Transverse colon (tissue), 4 donors: ENCODE measurements at regions of chr1 and their contacts with region 1.

Region 1: GRCh38 chr1:206982216-206982615 is 12.0 kb upstream of the FCAMR start:
- DNase-seq: peak; percentile 69
- H3K4me3 ChIP-seq: no peak overlapping the region
- H3K27ac ChIP-seq: no peak overlapping the region
- H3K4me1 ChIP-seq: peaks cover 0 to 34% (median 12%) of the 10 kb centered on the region in 4 donors
- H3K27me3 ChIP-seq: no peaks in the 10 kb centered on the region
- CTCF ChIP-seq: peak; percentile 53 to 71 (median 61)
- EP300 ChIP-seq: no peak
- POLR2A ChIP-seq: no peak

Region 2: DNA sequence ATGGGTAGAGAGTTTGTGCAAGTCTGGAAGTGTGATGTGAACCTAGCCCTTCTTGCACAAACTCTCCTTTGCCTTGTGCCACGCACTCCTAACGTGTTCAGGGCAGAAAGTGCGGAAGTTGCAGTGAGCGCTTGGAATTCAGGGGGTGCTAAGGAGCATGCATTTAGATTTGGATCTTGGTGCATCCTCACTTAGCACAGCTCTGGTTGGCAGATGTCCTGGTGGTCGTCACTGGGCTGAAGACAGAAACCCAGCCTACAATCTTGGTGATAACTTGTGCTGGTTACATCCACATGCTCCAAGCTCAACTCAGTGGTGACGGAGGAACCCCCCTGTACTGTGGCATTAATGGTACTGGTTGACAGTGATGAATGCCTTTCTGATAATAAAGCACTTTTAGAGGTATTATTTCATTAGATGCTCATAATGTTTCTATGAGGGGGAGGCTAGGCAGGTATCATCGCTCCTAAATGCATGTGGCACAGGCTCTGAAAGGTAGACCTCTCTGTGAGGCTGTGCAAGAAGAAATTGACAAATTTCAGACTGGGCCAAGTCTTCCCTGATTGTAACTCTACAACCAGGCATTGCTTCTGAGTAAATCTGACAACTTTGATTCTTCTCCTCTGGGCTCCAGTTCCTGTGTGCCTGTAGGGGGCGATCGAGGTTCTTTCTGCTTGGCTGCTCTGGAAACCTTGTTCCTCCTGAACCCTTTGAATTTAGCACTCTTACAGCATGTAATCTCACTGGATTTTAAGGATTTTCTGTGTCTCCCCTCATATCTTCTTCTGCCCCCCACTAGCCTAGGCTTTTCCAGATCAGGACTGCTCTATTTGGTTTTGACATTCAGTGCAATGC is 256.9 kb before region 1 on chr1:
- in situ Hi-C with region 1: loop called in 2 of 4 experiments (anchors 10 kb)
- intact Hi-C with region 1: no loop called
- DNase-seq: peak; percentile 60
- H3K4me3 ChIP-seq: no peak overlapping the region
- H3K27ac ChIP-seq: no peak overlapping the region
- H3K4me1 ChIP-seq: peaks cover 14 to 43% (median 25%) of the 10 kb centered on the region in 4 donors
- H3K27me3 ChIP-seq: no peaks in the 10 kb centered on the region
- CTCF ChIP-seq: peak; percentile 25 to 63 (median 40)
- EP300 ChIP-seq: no peak
- POLR2A ChIP-seq: no peak

Region 3: DNA sequence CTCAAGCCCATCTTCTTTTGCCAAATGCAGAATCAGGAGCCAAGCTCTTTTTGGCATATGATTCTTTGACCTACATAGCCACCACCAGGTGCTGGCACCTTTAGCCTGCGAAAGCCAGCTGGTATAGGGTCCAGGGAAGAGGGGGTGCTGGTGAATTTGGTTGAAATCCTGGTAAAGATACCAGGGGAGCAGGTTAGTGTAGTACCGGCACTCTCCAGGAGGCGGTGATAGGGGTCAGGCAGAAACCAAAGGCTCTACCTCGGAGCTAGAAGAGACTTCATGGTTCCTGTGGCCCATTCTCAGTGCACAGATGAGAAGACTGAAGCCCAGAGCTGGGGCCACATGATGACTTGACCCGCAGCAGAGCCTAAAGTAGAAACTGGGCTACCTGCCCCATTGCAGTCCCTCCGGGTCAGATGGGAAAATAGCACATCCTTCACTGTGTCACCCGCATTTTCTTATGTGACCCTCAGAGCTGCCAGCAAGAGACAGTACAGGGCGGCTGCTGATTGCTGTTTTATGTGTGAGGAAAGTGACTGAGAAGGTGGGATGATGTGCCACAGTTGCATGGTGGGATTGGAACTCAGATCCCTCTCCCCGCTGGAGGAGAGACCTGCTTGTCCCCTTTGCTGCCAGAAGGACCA is 247.6 kb before region 1 on chr1:
- in situ Hi-C with region 1: loop called in 2 of 4 experiments (anchors 10 kb)
- intact Hi-C with region 1: no loop called
- DNase-seq: peak; percentile 62
- H3K4me3 ChIP-seq: no peak overlapping the region
- H3K27ac ChIP-seq: no peak overlapping the region
- H3K4me1 ChIP-seq: peaks cover 0 to 23% (median 5%) of the 10 kb centered on the region in 4 donors
- H3K27me3 ChIP-seq: no peaks in the 10 kb centered on the region
- CTCF ChIP-seq: peak; percentile 66 to 80 (median 74)
- EP300 ChIP-seq: no peak
- POLR2A ChIP-seq: no peak